Activated CD4-positive, alpha-beta memory T cell treated with anti-CD3 and anti-CD28 coated beads for 36 hours (primary cell): ENCODE measurements at regions of chr10 and their contacts with region 1.

Region 1: DNA sequence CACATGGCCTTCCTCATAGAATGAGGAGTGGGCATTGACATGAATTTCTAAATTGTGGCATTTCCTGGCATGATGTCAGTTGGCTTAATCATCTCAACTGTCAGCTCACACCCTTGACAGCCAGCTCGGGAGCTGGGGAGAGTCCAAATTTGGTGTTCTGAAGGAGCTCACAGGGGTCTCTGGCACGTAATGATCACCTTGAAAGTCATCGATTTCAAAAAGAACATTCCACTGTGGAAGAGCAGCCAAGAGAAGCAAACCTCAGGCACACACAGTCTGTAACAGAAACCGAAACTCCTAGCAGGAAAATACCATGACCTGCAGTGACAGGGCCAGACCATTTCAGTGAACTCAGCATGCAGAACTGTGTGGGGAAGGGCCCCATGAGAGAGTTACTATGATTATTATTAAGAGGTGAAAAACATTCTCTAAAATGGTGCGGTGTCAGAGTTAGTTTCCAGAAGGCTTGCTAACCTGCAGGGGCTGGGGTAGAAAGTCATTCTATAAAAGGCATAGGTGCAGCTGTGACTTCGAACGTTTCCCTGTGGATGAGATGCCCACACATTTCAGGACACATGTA is 26.4 kb upstream of the KLF6 start:
- DNase-seq: peak; percentile 82
- H3K4me3 Mint-ChIP-seq: peak overlapping the region; percentile 59
- H3K27ac Mint-ChIP-seq: no peak overlapping the region
- H3K4me1 Mint-ChIP-seq: peaks cover 86% of the 10 kb centered on the region
- H3K27me3 Mint-ChIP-seq: no peaks in the 10 kb centered on the region

Region 2: GRCh38 chr10:3568983-3569382 is 242.4 kb before region 1 on chr10:
- CTCF ChIA-PET with region 1: no interaction called
- POLR2A ChIA-PET with region 1: no interaction called
- intact Hi-C with region 1: no loop called
- DNase-seq: no peak
- H3K4me3 Mint-ChIP-seq: no peak overlapping the region
- H3K27ac Mint-ChIP-seq: no peak overlapping the region
- H3K4me1 Mint-ChIP-seq: peaks cover 18% of the 10 kb centered on the region
- H3K27me3 Mint-ChIP-seq: no peaks in the 10 kb centered on the region

Region 3: GRCh38 chr10:3757638-3758490 is 53.5 kb before region 1 on chr10:
- CTCF ChIA-PET with region 1: interaction called, 4 read pairs
- POLR2A ChIA-PET with region 1: interaction called, 13 read pairs
- intact Hi-C with region 1: loop called (anchors 1 kb)
- DNase-seq: peak; percentile 84
- H3K4me3 Mint-ChIP-seq: peak overlapping the region; percentile 71
- H3K27ac Mint-ChIP-seq: peak overlapping the region; percentile 100
- H3K4me1 Mint-ChIP-seq: peaks cover 83% of the 10 kb centered on the region
- H3K27me3 Mint-ChIP-seq: no peaks in the 10 kb centered on the region

Region 4: GRCh38 chr10:3828404-3829155 is 17.2 kb after region 1 on chr10:
- CTCF ChIA-PET with region 1: interaction called, 7 read pairs
- POLR2A ChIA-PET with region 1: interaction called, 50 read pairs
- intact Hi-C with region 1: loop called (anchors 1 kb)
- DNase-seq: peak; percentile 70
- H3K4me3 Mint-ChIP-seq: peak overlapping the region; percentile 56
- H3K27ac Mint-ChIP-seq: peak overlapping the region; percentile 97
- H3K4me1 Mint-ChIP-seq: peaks cover 63% of the 10 kb centered on the region
- H3K27me3 Mint-ChIP-seq: no peaks in the 10 kb centered on the region

Region 5: GRCh38 chr10:3873728-3874461 is 62.5 kb after region 1 on chr10:
- CTCF ChIA-PET with region 1: interaction called, 3 read pairs
- POLR2A ChIA-PET with region 1: interaction called, 31 read pairs
- intact Hi-C with region 1: loop called (anchors 1 kb)
- DNase-seq: no peak
- H3K4me3 Mint-ChIP-seq: no peak overlapping the region
- H3K27ac Mint-ChIP-seq: peak overlapping the region; percentile 87
- H3K4me1 Mint-ChIP-seq: peaks cover 72% of the 10 kb centered on the region
- H3K27me3 Mint-ChIP-seq: no peaks in the 10 kb centered on the region

Region 6: GRCh38 chr10:4034907-4035598 is 223.7 kb after region 1 on chr10:
- CTCF ChIA-PET with region 1: no interaction called
- POLR2A ChIA-PET with region 1: no interaction called
- intact Hi-C with region 1: loop called (anchors 10 kb)
- DNase-seq: peak; percentile 48
- H3K4me3 Mint-ChIP-seq: peak overlapping the region; percentile 2
- H3K27ac Mint-ChIP-seq: peak overlapping the region; percentile 32
- H3K4me1 Mint-ChIP-seq: peaks cover 33% of the 10 kb centered on the region
- H3K27me3 Mint-ChIP-seq: no peaks in the 10 kb centered on the region